OCI-LY7 (cell line): ENCODE measurements at regions of chr2 and their contacts with region 1.

Region 1: DNA sequence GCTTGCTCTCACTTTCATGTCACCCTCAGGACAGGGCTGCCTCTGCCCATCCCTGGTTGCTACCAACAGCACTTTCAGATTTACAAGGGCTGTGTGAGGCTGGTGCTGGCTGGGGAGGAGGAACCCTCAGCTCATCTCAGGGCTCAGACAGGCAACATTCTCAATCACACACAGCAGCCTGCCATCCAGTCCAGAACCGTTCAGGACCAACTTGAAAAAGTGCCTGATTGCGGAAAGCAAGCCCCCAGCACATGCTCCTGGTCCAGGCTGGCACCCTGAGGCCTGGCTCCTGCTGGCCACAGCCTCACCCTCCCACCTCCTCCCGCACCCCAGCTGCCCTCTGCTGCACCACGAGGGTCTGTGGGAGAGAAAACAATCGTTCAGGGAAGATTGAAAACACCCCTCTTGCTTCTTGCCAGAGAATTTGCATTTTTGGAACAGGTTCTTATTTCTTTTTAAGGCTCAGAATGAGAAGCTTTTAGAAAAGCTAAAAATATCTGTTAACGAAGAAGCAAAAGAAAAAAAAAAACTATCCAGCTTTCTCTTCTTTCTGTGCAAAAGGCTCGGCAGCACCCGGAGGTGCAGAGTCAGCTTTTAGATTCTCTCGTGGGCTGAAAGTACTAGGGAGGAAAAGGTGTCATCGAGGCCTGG is 403.8 kb upstream of the ID2 start:
- DNase-seq: peak; percentile 46
- H3K4me3 ChIP-seq: peak overlapping the region; percentile 43
- H3K27ac ChIP-seq: peak overlapping the region; percentile 22
- H3K4me1 ChIP-seq: peaks cover 19% of the 10 kb centered on the region
- CTCF ChIP-seq: no peak

Region 2: DNA sequence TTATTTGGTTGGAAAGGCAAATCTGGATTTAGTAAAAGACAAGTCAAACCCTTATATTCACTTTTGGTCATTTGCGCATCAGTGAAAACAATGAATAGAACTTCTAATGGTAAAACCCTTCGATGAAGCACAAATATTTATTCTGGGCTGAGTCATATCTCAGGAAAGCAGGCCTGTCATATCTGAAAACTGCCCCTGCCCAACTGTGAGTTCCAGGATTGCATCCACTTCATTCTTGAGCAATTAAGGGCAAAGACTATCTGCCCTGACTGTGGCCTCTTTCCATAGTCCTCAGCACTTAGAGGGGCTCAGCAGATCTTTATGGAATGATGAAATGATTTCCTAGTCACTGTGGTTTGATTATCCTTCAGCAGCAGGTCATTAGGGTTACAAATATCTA is 391.4 kb before region 1 on chr2:
- CTCF ChIA-PET with region 1: no interaction called
- POLR2A ChIA-PET with region 1: no interaction called
- intact Hi-C with region 1: no loop called
- DNase-seq: no peak
- H3K4me3 ChIP-seq: no peak overlapping the region
- H3K27ac ChIP-seq: no peak overlapping the region
- H3K4me1 ChIP-seq: peaks cover 9% of the 10 kb centered on the region
- CTCF ChIP-seq: no peak

Region 3: DNA sequence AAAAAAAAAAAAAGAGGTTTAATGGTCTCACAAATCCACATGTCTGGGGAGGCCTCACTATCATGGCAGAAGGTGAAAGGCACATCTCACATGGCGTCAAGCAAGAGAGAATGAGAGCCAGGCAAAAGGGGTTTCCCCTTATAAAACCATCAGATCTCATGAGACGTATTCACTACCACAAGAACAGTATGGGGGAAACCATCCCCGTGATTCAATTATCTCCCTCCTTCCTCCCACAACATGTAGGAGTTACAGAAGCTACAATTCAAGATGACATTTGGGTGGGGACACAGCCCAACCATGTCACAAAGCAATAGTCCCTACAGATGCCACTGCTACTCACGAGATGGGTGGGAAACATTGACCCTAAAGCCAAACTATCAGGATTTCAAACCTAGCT is 11.1 kb after region 1 on chr2:
- CTCF ChIA-PET with region 1: no interaction called
- POLR2A ChIA-PET with region 1: interaction called, 10 read pairs
- intact Hi-C with region 1: no loop called
- DNase-seq: no peak
- H3K4me3 ChIP-seq: no peak overlapping the region
- H3K27ac ChIP-seq: no peak overlapping the region
- H3K4me1 ChIP-seq: no peaks in the 10 kb centered on the region
- CTCF ChIP-seq: no peak